HepG2 (cell line): ENCODE measurements at regions of chr1 and their contacts with region 1.

Region 1: GRCh38 chr1:179510038-179510437 is 65.7 kb downstream of the NPHS2 start:
- DNase-seq: no peak
- ATAC-seq: no peak
- H3K4me3 ChIP-seq: no peak overlapping the region
- H3K27ac ChIP-seq: no peak overlapping the region
- H3K4me1 ChIP-seq: no peaks in the 10 kb centered on the region
- H3K27me3 ChIP-seq: no peaks in the 10 kb centered on the region
- CTCF ChIP-seq: no peak
- EP300 ChIP-seq: no peak
- POLR2A ChIP-seq: no peak
- RAD21 ChIP-seq: no peak

Region 2: GRCh38 chr1:179278920-179279319 is 231.1 kb before region 1 on chr1:
- CTCF ChIA-PET with region 1: no interaction called
- POLR2A ChIA-PET with region 1: no interaction called
- in situ Hi-C with region 1: no loop called
- intact Hi-C with region 1: no loop called
- DNase-seq: no peak
- ATAC-seq: no peak
- H3K4me3 ChIP-seq: no peak overlapping the region
- H3K27ac ChIP-seq: no peak overlapping the region
- H3K4me1 ChIP-seq: peaks cover 9% of the 10 kb centered on the region
- H3K27me3 ChIP-seq: no peaks in the 10 kb centered on the region
- CTCF ChIP-seq: no peak
- EP300 ChIP-seq: no peak
- POLR2A ChIP-seq: no peak
- RAD21 ChIP-seq: no peak

Region 3: DNA sequence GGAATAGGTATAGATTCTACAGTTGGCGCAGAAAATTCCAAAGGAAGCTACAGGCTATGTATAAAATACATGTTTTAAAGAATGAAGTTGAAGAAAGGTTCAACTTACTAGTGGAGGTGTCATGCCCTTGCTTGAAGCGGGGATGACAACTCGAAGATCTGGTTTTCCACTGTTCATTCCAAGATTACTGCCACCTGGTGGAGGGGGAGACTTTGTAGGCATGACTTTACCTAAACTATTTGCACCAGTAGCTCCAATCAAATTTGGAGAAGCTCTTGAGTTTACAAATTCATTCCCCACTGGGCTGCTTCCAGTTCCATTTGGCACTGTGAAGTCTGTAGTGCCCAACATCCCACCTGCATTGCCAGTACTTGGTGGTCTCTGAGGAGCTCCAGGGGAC is 62.5 kb before region 1 on chr1:
- CTCF ChIA-PET with region 1: no interaction called
- POLR2A ChIA-PET with region 1: no interaction called
- in situ Hi-C with region 1: loop called (anchors 10 kb)
- intact Hi-C with region 1: no loop called
- DNase-seq: peak; percentile 35
- ATAC-seq: no peak; the same call in 2 of the 3 replicates
- H3K4me3 ChIP-seq: no peak overlapping the region
- H3K27ac ChIP-seq: no peak overlapping the region
- H3K4me1 ChIP-seq: no peaks in the 10 kb centered on the region
- H3K27me3 ChIP-seq: no peaks in the 10 kb centered on the region; a peak in 1 of 5 replicates
- CTCF ChIP-seq: peak; percentile 37
- EP300 ChIP-seq: no peak
- POLR2A ChIP-seq: no peak
- RAD21 ChIP-seq: no peak

Region 4: GRCh38 chr1:179632868-179633267 is 122.8 kb after region 1 on chr1:
- CTCF ChIA-PET with region 1: no interaction called
- POLR2A ChIA-PET with region 1: no interaction called
- in situ Hi-C with region 1: no loop called
- intact Hi-C with region 1: no loop called
- DNase-seq: no peak
- ATAC-seq: no peak
- H3K4me3 ChIP-seq: no peak overlapping the region
- H3K27ac ChIP-seq: no peak overlapping the region
- H3K4me1 ChIP-seq: no peaks in the 10 kb centered on the region
- H3K27me3 ChIP-seq: no peaks in the 10 kb centered on the region
- CTCF ChIP-seq: no peak
- EP300 ChIP-seq: no peak
- POLR2A ChIP-seq: no peak
- RAD21 ChIP-seq: no peak